GM12878 (cell line): ENCODE measurements at regions of chr9 and their contacts with region 1.

Region 1: GRCh38 chr9:94554439-94555391 is at the start of gene PCAT7:
- DNase-seq: peak; percentile 12
- ATAC-seq: peak; percentile 100
- H3K4me3 ChIP-seq: no peak within 1 kb of the TSS
- H3K27ac ChIP-seq: no peak within 1 kb of the TSS
- H3K4me1 ChIP-seq: no peaks in the 10 kb centered on the region
- H3K27me3 ChIP-seq: no peaks in the 10 kb centered on the region; a peak in 1 of 4 replicates
- CTCF ChIP-seq: peak; percentile 28 to 54 (median 52); a peak in 4 of 6 replicates
- EP300 ChIP-seq: no peak
- POLR2A ChIP-seq: no peak
- RAD21 ChIP-seq: peak; percentile 44; the same call in 1 of the 2 replicates
- polyA plus RNA-seq, gene PCAT7: 0.04 TPM in 1 of 2 experiments, not detected in the other

Region 2: GRCh38 chr9:94603259-94604160 is 48.8 kb after region 1 on chr9:
- CTCF ChIA-PET with region 1: interaction called, 7 read pairs
- POLR2A ChIA-PET with region 1: no interaction called
- RAD21 ChIA-PET with region 1: interaction called, 6 read pairs
- SMC1A ChIA-PET with region 1: interaction called, 5 read pairs
- in situ Hi-C with region 1: no loop called
- intact Hi-C with region 1: loop called (anchors 1 kb)
- DNase-seq: peak; percentile 16
- ATAC-seq: peak; percentile 95
- H3K4me3 ChIP-seq: no peak overlapping the region
- H3K27ac ChIP-seq: no peak overlapping the region
- H3K4me1 ChIP-seq: peaks cover 3% of the 10 kb centered on the region; the same call in 1 of the 2 replicates
- H3K27me3 ChIP-seq: peaks cover 0 to 10% of the 10 kb centered on the region in 2 experiments; a peak in 2 of 4 replicates
- CTCF ChIP-seq: peak; percentile 73 to 85 (median 77)
- EP300 ChIP-seq: no peak
- POLR2A ChIP-seq: no peak
- RAD21 ChIP-seq: peak; percentile 81

Region 3: GRCh38 chr9:94623253-94623652 is 68.5 kb after region 1 on chr9:
- CTCF ChIA-PET with region 1: interaction called, 7 read pairs
- POLR2A ChIA-PET with region 1: no interaction called
- RAD21 ChIA-PET with region 1: interaction called, 3 read pairs
- SMC1A ChIA-PET with region 1: interaction called, 3 read pairs
- in situ Hi-C with region 1: no loop called
- intact Hi-C with region 1: loop called (anchors 5 kb)
- DNase-seq: no peak
- ATAC-seq: peak; percentile 95
- H3K4me3 ChIP-seq: no peak overlapping the region
- H3K27ac ChIP-seq: no peak overlapping the region
- H3K4me1 ChIP-seq: no peaks in the 10 kb centered on the region
- H3K27me3 ChIP-seq: peaks cover 0 to 2% of the 10 kb centered on the region in 2 experiments; a peak in 1 of 4 replicates
- CTCF ChIP-seq: peak; percentile 48 to 70 (median 63)
- EP300 ChIP-seq: no peak
- POLR2A ChIP-seq: no peak
- RAD21 ChIP-seq: peak; percentile 47